GM12878 (cell line): ENCODE measurements at regions of chr10 and their contacts with region 1.

Region 1: DNA sequence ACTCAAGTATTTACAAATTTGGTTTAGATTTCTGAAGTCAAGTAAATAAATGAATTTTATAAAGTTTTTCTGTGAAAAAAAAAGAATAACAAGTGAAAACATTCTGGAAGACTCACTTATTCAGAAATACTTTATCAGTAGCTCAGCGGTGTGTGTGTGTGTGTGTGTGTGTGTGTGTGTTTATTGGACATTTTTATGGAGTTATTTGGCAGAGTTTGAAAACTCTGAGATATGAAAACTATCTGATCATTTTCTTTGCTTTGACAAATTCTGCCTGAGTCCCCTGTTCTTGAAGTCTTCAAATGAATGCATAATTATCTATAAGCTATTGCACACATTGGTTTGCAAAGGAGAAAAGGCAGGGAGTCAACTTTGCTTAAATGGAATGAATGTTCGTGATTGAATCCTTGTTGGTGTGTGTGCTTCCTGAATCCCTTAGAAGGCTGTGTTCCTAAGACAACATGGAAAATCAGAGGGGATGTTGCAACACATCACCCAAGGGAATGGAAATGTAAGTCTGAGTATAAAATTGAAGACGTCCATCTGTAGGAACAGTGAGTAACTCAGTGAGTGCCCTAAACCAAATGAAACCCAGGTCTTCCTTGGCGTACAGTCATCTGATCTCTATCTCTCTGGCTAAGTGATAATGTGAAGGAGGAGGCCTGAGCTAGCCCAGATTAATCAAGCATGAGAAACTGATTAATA is 160.9 kb downstream of the REEP3 start:
- DNase-seq: no peak
- ATAC-seq: peak; percentile 82
- H3K4me3 ChIP-seq: no peak overlapping the region
- H3K27ac ChIP-seq: no peak overlapping the region
- H3K4me1 ChIP-seq: peaks cover 6% of the 10 kb centered on the region
- H3K27me3 ChIP-seq: no peaks in the 10 kb centered on the region
- CTCF ChIP-seq: no peak
- EP300 ChIP-seq: no peak
- POLR2A ChIP-seq: no peak
- RAD21 ChIP-seq: no peak

Region 2: DNA sequence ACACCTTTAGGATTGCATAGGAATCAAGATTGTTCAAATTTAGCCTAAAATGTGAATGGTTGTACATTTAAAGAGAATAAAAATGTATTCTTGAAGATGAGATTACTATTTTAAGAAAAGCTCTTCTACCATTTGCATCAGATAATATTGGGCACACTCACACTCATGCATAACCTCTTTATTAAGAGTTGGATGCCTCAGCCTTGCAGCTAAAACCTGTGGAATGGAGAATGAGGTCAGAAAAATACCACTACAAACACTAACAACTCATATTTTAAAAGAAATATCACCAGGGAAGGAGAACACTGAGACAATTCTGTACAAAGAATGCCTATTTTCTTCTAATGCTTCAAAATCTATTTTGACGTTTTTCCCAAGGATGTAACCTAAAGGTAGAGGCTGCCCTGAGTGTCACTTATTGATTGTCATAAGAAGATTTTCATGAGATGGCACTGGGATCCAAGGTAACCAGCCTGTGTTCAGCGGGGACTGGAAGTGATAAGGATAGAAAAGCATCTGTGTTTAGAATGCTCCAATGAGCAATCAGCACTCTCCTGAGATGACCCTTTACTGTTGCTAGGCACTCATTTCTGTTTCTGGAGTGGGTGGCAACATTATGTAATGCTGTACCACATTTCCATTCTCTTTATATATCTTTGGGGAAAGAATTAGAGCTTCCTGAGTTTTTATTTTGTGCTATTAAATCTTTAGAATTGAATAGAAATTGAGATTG is 134.4 kb before region 1 on chr10:
- CTCF ChIA-PET with region 1: no interaction called
- POLR2A ChIA-PET with region 1: no interaction called
- RAD21 ChIA-PET with region 1: no interaction called
- SMC1A ChIA-PET with region 1: no interaction called
- in situ Hi-C with region 1: no loop called
- intact Hi-C with region 1: no loop called
- DNase-seq: no peak
- ATAC-seq: no peak; the same call in 2 of the 3 replicates
- H3K4me3 ChIP-seq: no peak overlapping the region
- H3K27ac ChIP-seq: no peak overlapping the region
- H3K4me1 ChIP-seq: no peaks in the 10 kb centered on the region
- H3K27me3 ChIP-seq: no peaks in the 10 kb centered on the region
- CTCF ChIP-seq: no peak
- EP300 ChIP-seq: no peak
- POLR2A ChIP-seq: no peak
- RAD21 ChIP-seq: no peak

Region 3: DNA sequence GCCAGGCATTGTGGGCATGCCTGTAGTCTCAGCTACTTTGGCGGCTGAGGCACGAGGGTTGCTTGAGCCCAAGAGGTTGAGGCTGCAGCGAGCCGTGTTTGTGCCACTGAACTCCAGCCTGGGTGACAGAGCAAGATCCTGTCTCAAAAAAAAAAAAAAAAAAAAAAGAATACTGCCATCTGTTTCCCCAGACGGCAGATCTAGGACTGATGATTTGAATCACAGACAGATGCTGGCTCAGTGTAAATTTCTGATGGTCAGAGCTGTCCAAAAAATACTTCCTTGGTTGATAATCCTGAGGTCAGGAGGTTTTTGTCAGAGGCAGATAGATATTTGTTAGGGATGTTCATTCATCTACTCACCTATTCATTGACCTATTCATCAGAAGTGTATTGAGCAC is 30.3 kb before region 1 on chr10:
- CTCF ChIA-PET with region 1: no interaction called
- POLR2A ChIA-PET with region 1: interaction called, 10 read pairs
- RAD21 ChIA-PET with region 1: no interaction called
- SMC1A ChIA-PET with region 1: no interaction called
- in situ Hi-C with region 1: no loop called
- intact Hi-C with region 1: no loop called
- DNase-seq: no peak
- ATAC-seq: no peak
- H3K4me3 ChIP-seq: no peak overlapping the region
- H3K27ac ChIP-seq: no peak overlapping the region
- H3K4me1 ChIP-seq: no peaks in the 10 kb centered on the region
- H3K27me3 ChIP-seq: no peaks in the 10 kb centered on the region
- CTCF ChIP-seq: no peak
- EP300 ChIP-seq: no peak
- POLR2A ChIP-seq: no peak
- RAD21 ChIP-seq: no peak

Region 4: GRCh38 chr10:63692220-63692896 is 10.2 kb after region 1 on chr10:
- CTCF ChIA-PET with region 1: interaction called, 3 read pairs
- POLR2A ChIA-PET with region 1: interaction called, 10 read pairs
- RAD21 ChIA-PET with region 1: no interaction called
- SMC1A ChIA-PET with region 1: interaction called, 4 read pairs
- in situ Hi-C with region 1: no loop called
- intact Hi-C with region 1: no loop called
- DNase-seq: no peak
- ATAC-seq: peak; percentile 70
- H3K4me3 ChIP-seq: no peak overlapping the region
- H3K27ac ChIP-seq: no peak overlapping the region
- H3K4me1 ChIP-seq: peaks cover 5% of the 10 kb centered on the region; the same call in 1 of the 2 replicates
- H3K27me3 ChIP-seq: no peaks in the 10 kb centered on the region
- CTCF ChIP-seq: no peak
- EP300 ChIP-seq: no peak
- POLR2A ChIP-seq: no peak
- RAD21 ChIP-seq: no peak